Activated T-helper 1 cell treated with anti-CD3 and anti-CD28 coated beads, Interleukin-12 subunit alpha, Interleukin-12 subunit beta, Interleukin-2, Interleukin-4 antibody, amounts not matched to agents 30 ng/mL and 10 ng/mL and 1 ng/mL, durations not matched to agents 14 hours and 24 hours and 36 hours (primary cell): ENCODE measurements at regions of chr1 and their contacts with region 1.

Region 1: GRCh38 chr1:113978863-113979702 is at the start of gene OLFML3:
- DNase-seq: no peak
- H3K4me3 Mint-ChIP-seq: no peak within 1 kb of the TSS
- H3K27ac Mint-ChIP-seq: peak within 1 kb of the TSS; percentile 11
- H3K4me1 Mint-ChIP-seq: peaks cover 43% of the 10 kb centered on the region
- H3K27me3 Mint-ChIP-seq: no peaks in the 10 kb centered on the region
- total RNA-seq, gene OLFML3: 0.10 TPM in 2 replicates

Region 2: DNA sequence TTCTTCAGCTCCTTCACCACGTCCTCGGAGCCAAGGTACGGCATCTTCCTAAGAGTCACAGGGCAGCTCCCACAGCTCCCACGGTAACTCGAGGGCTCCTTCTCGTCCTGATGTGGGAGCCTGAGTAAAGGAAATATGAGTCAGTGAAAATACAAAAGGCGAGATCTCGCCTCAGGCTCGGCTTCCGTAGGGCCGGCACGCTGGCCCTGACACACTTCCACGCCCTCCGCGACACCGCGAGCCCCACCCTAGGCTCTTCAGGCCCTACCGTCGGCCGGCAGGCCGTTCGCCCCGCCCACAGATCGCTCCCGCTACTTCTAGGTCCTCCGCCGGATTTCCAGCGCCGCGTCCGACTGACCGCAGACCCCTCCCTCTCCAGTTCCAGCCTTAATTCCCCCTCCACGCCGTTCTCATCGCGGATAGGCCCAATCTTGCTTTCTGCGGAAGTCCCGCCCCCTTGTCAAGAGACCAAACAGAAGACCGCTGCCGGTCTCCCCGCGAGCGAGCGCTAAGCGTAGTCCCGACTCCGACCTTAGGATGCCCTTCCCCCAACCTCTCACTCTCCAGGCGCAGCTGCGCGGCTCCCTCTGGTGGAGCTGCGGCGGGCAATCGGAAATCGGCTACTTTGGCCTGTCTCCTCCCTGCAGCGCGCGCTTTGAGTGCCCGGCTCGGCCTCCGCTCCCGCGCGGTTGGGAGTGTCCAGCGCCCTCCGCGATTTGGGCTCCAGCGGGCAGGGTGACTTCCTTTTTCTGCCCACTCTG is 74.2 kb before region 1 on chr1 and contains the starts of genes AP4B1 and DCLRE1B:
- intact Hi-C with region 1: no loop called
- DNase-seq: peak; percentile 98
- H3K4me3 Mint-ChIP-seq: peak within 1 kb of the TSS; percentile 99
- H3K27ac Mint-ChIP-seq: peak within 1 kb of the TSS; percentile 95
- H3K4me1 Mint-ChIP-seq: peaks cover 58% of the 10 kb centered on the region
- H3K27me3 Mint-ChIP-seq: no peaks in the 10 kb centered on the region
- total RNA-seq, gene AP4B1: 36.3 and 40.9 TPM in 2 replicates
- total RNA-seq, gene DCLRE1B: 20.9 and 21.2 TPM in 2 replicates

Region 3: DNA sequence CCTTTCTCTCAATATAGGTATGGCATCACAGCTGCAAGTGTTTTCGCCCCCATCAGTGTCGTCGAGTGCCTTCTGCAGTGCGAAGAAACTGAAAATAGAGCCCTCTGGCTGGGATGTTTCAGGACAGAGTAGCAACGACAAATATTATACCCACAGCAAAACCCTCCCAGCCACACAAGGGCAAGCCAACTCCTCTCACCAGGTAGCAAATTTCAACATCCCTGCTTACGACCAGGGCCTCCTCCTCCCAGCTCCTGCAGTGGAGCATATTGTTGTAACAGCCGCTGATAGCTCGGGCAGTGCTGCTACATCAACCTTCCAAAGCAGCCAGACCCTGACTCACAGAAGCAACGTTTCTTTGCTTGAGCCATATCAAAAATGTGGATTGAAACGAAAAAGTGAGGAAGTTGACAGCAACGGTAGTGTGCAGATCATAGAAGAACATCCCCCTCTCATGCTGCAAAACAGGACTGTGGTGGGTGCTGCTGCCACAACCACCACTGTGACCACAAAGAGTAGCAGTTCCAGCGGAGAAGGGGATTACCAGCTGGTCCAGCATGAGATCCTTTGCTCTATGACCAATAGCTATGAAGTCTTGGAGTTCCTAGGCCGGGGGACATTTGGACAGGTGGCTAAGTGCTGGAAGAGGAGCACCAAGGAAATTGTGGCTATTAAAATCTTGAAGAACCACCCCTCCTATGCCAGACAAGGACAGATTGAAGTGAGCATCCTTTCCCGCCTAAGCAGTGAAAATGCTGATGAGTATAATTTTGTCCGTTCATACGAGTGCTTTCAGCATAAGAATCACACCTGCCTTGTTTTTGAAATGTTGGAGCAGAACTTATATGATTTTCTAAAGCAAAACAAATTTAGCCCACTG is 38.5 kb before region 1 on chr1:
- intact Hi-C with region 1: loop called (anchors 2 kb)
- DNase-seq: peak; percentile 34
- H3K4me3 Mint-ChIP-seq: peak overlapping the region; percentile 75
- H3K27ac Mint-ChIP-seq: peak overlapping the region; percentile 89
- H3K4me1 Mint-ChIP-seq: peaks cover 67% of the 10 kb centered on the region
- H3K27me3 Mint-ChIP-seq: no peaks in the 10 kb centered on the region

Region 4: GRCh38 chr1:113950940-113951339 is 28.1 kb before region 1 on chr1:
- intact Hi-C with region 1: no loop called
- DNase-seq: no peak
- H3K4me3 Mint-ChIP-seq: no peak overlapping the region
- H3K27ac Mint-ChIP-seq: no peak overlapping the region
- H3K4me1 Mint-ChIP-seq: peaks cover 41% of the 10 kb centered on the region
- H3K27me3 Mint-ChIP-seq: no peaks in the 10 kb centered on the region

Region 5: DNA sequence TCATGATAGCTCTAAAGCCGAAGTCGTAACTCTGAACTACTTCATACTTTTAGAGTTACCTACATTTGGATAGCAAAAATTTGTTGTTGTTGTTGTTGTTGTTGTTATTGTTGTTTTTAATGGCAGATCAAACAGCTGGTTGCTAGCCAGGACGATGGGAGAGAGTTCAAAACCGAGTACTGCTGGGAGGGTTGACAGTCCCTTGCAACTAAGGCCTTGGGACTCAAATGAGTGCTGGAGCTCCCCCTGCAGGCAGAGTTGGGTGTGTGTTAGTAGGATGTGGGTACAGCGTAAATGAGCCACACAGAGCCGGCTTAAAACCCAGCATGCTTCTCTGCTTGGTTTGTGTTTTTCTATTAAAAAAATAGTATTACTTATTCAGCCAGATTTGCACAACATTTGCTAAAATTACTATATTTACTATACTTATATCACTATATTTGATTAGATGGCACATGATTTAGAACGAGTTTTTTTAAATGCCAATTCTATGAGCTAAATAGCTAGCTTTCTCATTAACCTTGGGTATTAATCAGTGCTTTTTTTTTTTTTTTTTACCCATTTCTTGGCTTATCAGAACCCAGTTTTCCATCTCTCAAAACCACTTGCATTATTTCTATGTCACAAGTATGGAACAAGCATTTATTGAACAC is 303.8 kb after region 1 on chr1:
- intact Hi-C with region 1: loop called (anchors 1 kb)
- DNase-seq: peak; percentile 64
- H3K4me3 Mint-ChIP-seq: no peak overlapping the region
- H3K27ac Mint-ChIP-seq: no peak overlapping the region
- H3K4me1 Mint-ChIP-seq: no peaks in the 10 kb centered on the region
- H3K27me3 Mint-ChIP-seq: peaks cover 12% of the 10 kb centered on the region

Region 6: GRCh38 chr1:114558544-114558943 is 579.5 kb after region 1 on chr1:
- intact Hi-C with region 1: loop called (anchors 1 kb)
- DNase-seq: no peak
- H3K4me3 Mint-ChIP-seq: no peak overlapping the region
- H3K27ac Mint-ChIP-seq: no peak overlapping the region
- H3K4me1 Mint-ChIP-seq: no peaks in the 10 kb centered on the region
- H3K27me3 Mint-ChIP-seq: no peaks in the 10 kb centered on the region

Region 7: GRCh38 chr1:114670083-114671010 is 691.3 kb after region 1 on chr1:
- intact Hi-C with region 1: loop called (anchors 1 kb)
- DNase-seq: peak; percentile 76
- H3K4me3 Mint-ChIP-seq: peak overlapping the region; percentile 89
- H3K27ac Mint-ChIP-seq: peak overlapping the region; percentile 20
- H3K4me1 Mint-ChIP-seq: peaks cover 8% of the 10 kb centered on the region
- H3K27me3 Mint-ChIP-seq: peaks cover 48% of the 10 kb centered on the region